ENCODE measurements at regions of chr13 and their contacts with region 1.

Region 1: GRCh38 chr13:38670627-38671026 is 16.2 kb upstream of the FREM2 start:
- DNase-seq: peak; percentile 97
- H3K4me3 ChIP-seq: no peak overlapping the region
- H3K27ac ChIP-seq: peak overlapping the region; percentile 61
- H3K4me1 ChIP-seq: peaks cover 59% of the 10 kb centered on the region
- H3K27me3 ChIP-seq: no peaks in the 10 kb centered on the region
- CTCF ChIP-seq: peak; percentile 87

Region 2: GRCh38 chr13:38316129-38316528 is 354.5 kb before region 1 on chr13:
- CTCF ChIA-PET with region 1: no interaction called
- POLR2A ChIA-PET with region 1: no interaction called
- intact Hi-C with region 1: no loop called
- DNase-seq: no peak
- H3K4me3 ChIP-seq: no peak overlapping the region
- H3K27ac ChIP-seq: no peak overlapping the region
- H3K4me1 ChIP-seq: no peaks in the 10 kb centered on the region
- H3K27me3 ChIP-seq: no peaks in the 10 kb centered on the region
- CTCF ChIP-seq: no peak

Region 3: GRCh38 chr13:38452656-38453055 is 218.0 kb before region 1 on chr13:
- CTCF ChIA-PET with region 1: no interaction called
- POLR2A ChIA-PET with region 1: no interaction called
- intact Hi-C with region 1: no loop called
- DNase-seq: no peak
- H3K4me3 ChIP-seq: no peak overlapping the region
- H3K27ac ChIP-seq: no peak overlapping the region
- H3K4me1 ChIP-seq: no peaks in the 10 kb centered on the region
- H3K27me3 ChIP-seq: no peaks in the 10 kb centered on the region
- CTCF ChIP-seq: no peak

Region 4: DNA sequence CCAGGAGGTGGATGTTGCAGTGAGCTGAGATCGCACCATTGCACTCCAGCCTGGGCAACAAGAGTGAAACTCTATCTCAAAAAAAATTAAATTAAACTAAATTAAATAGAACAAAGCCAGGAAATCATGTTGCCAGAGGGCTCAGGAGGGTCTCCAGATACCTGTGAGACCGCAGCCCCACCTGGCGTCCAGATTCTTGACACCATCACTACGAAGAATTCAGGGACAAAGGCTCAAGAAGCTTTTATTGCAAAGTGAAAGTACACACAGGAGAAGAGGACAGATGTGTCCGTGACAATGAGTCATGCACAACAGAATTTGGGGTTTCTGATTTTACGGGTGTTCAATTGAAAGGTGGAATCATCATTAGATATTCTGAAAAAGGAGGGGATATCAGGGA is 243.4 kb after region 1 on chr13:
- CTCF ChIA-PET with region 1: no interaction called
- POLR2A ChIA-PET with region 1: no interaction called
- intact Hi-C with region 1: loop called (anchors 5 kb)
- DNase-seq: no peak
- H3K4me3 ChIP-seq: no peak overlapping the region
- H3K27ac ChIP-seq: no peak overlapping the region
- H3K4me1 ChIP-seq: no peaks in the 10 kb centered on the region
- H3K27me3 ChIP-seq: no peaks in the 10 kb centered on the region
- CTCF ChIP-seq: no peak

Measured in A673 (cell line).